CD8-positive, alpha-beta T cell (primary cell): ENCODE measurements at regions of chr20 and their contacts with region 1.

Region 1: GRCh38 chr20:45017857-45018256 is 51.5 kb downstream of the STK4 start:
- DNase-seq: no peak
- ATAC-seq: no peak
- H3K4me3 ChIP-seq: no peak overlapping the region
- H3K4me3 Mint-ChIP-seq: no peak overlapping the region
- H3K27ac ChIP-seq: no peak overlapping the region
- H3K27ac Mint-ChIP-seq: peak overlapping the region; percentile 30
- H3K4me1 ChIP-seq: peaks cover 23% of the 10 kb centered on the region
- H3K4me1 Mint-ChIP-seq: peaks cover 74% of the 10 kb centered on the region
- H3K27me3 ChIP-seq: no peaks in the 10 kb centered on the region
- H3K27me3 Mint-ChIP-seq: no peaks in the 10 kb centered on the region
- CTCF ChIP-seq: no peak

Region 2: GRCh38 chr20:45036044-45036755 is 18.3 kb after region 1 on chr20:
- CTCF ChIA-PET with region 1: no interaction called
- POLR2A ChIA-PET with region 1: no interaction called
- intact Hi-C with region 1: loop called in 1 of 2 experiments (anchors 2 kb)
- DNase-seq: peak in 1 of 9 experiments; percentile 25
- ATAC-seq: no peak
- H3K4me3 ChIP-seq: no peak overlapping the region
- H3K4me3 Mint-ChIP-seq: no peak overlapping the region
- H3K27ac ChIP-seq: no peak overlapping the region
- H3K27ac Mint-ChIP-seq: peak overlapping the region; percentile 11
- H3K4me1 ChIP-seq: peaks cover 78% of the 10 kb centered on the region
- H3K4me1 Mint-ChIP-seq: peaks cover 84% of the 10 kb centered on the region
- H3K27me3 ChIP-seq: no peaks in the 10 kb centered on the region
- H3K27me3 Mint-ChIP-seq: no peaks in the 10 kb centered on the region
- CTCF ChIP-seq: no peak